ENCODE measurements at regions of chr5 and their contacts with region 1.

Region 1: GRCh38 chr5:178204182-178204894 is at the start of gene HNRNPAB:
- DNase-seq: peak; percentile 99
- H3K4me3 ChIP-seq: peak within 1 kb of the TSS; percentile 84 to 90
- H3K27ac ChIP-seq: peak within 1 kb of the TSS; percentile 70 to 76
- H3K4me1 ChIP-seq: peaks cover 14 to 21% of the 10 kb centered on the region in 2 experiments
- H3K27me3 ChIP-seq: no peaks in the 10 kb centered on the region
- CTCF ChIP-seq: no peak
- EP300 ChIP-seq: no peak
- RAD21 ChIP-seq: no peak
- polyA plus RNA-seq, gene HNRNPAB: 157 and 164 TPM in 2 replicates

Region 2: DNA sequence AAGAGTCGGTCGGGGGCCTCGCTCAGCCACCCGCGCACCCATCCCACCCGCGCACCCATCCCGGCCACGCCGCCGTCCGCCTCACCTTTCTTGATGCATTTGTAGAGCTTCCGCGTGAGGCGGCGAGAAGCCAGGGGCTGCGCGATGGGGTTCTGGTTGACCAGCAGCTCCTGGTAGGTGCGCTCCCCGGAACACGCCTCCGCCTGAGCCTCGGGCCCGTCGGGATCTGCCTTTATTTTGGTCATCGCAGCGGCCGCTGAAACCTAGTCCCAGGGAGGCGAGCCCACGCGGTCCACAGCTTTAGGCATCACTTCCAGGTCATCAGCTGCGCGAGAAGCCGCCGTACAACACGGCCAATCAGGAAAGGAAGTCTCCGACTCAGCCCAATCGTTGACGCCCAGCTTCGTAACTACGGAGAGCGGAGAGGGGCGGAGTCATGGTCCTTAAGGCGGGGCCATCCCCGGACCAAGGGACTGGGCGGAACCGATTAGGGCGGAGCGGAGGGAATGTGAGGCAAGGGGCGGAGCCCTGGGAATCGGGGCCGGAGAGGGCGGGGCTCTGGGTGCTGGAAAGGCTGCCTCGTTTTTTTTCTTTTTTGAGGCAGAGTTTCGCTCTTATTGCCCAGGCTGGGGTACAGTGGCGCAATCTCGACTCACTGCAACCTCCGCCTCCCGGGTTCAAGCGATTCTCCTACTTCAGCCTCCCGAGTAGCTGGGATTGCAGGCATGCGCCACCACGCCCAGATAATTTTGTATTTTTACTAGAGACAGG is 50.6 kb before region 1 on chr5 and contains the start of gene NHP2:
- CTCF ChIA-PET with region 1: no interaction called
- POLR2A ChIA-PET with region 1: interaction called, 12 read pairs
- DNase-seq: peak; percentile 99
- H3K4me3 ChIP-seq: peak within 1 kb of the TSS; percentile 81 to 90
- H3K27ac ChIP-seq: peak within 1 kb of the TSS; percentile 36 to 64; a peak in 3 of 4 replicates
- H3K4me1 ChIP-seq: peaks cover 0 to 22% of the 10 kb centered on the region in 2 experiments; a peak in 3 of 4 replicates
- H3K27me3 ChIP-seq: no peaks in the 10 kb centered on the region
- CTCF ChIP-seq: no peak
- EP300 ChIP-seq: no peak
- RAD21 ChIP-seq: no peak
- polyA plus RNA-seq, gene NHP2: 313 and 455 TPM in 2 replicates

Region 3: GRCh38 chr5:178186427-178186826 is 17.9 kb before region 1 on chr5:
- CTCF ChIA-PET with region 1: no interaction called
- POLR2A ChIA-PET with region 1: interaction called, 11 read pairs
- DNase-seq: peak; percentile 45
- H3K4me3 ChIP-seq: no peak overlapping the region
- H3K27ac ChIP-seq: no peak overlapping the region
- H3K4me1 ChIP-seq: no peaks in the 10 kb centered on the region; a peak in 1 of 4 replicates
- H3K27me3 ChIP-seq: no peaks in the 10 kb centered on the region
- CTCF ChIP-seq: no peak
- EP300 ChIP-seq: no peak
- RAD21 ChIP-seq: no peak

Measured in SK-N-SH (cell line).